H1 (cell line): ENCODE measurements at regions of chr9 and their contacts with region 1.

Region 1: GRCh38 chr9:125255781-125256391 is 5.7 kb upstream of the GAPVD1 start:
- DNase-seq: no peak
- H3K4me3 ChIP-seq: no peak overlapping the region
- H3K27ac ChIP-seq: no peak overlapping the region
- H3K4me1 ChIP-seq: no peaks in the 10 kb centered on the region
- H3K27me3 ChIP-seq: no peaks in the 10 kb centered on the region
- CTCF ChIP-seq: peak; percentile 42 to 60 (median 50)
- EP300 ChIP-seq: no peak
- POLR2A ChIP-seq: no peak
- RAD21 ChIP-seq: peak; percentile 83 to 85

Region 2: GRCh38 chr9:125343518-125344275 is 87.8 kb after region 1 on chr9:
- CTCF ChIA-PET with region 1: interaction called, 10 read pairs
- POLR2A ChIA-PET with region 1: no interaction called
- DNase-seq: peak in 1 of 2 experiments; percentile 49
- H3K4me3 ChIP-seq: peak overlapping the region in 1 of 4 experiments; percentile 20; a peak in 1 of 8 replicates
- H3K27ac ChIP-seq: no peak overlapping the region
- H3K4me1 ChIP-seq: peaks cover 0 to 11% (median 4%) of the 10 kb centered on the region in 4 experiments; a peak in 5 of 7 replicates
- H3K27me3 ChIP-seq: no peaks in the 10 kb centered on the region
- CTCF ChIP-seq: no peak
- EP300 ChIP-seq: no peak
- POLR2A ChIP-seq: no peak
- RAD21 ChIP-seq: no peak

Region 3: DNA sequence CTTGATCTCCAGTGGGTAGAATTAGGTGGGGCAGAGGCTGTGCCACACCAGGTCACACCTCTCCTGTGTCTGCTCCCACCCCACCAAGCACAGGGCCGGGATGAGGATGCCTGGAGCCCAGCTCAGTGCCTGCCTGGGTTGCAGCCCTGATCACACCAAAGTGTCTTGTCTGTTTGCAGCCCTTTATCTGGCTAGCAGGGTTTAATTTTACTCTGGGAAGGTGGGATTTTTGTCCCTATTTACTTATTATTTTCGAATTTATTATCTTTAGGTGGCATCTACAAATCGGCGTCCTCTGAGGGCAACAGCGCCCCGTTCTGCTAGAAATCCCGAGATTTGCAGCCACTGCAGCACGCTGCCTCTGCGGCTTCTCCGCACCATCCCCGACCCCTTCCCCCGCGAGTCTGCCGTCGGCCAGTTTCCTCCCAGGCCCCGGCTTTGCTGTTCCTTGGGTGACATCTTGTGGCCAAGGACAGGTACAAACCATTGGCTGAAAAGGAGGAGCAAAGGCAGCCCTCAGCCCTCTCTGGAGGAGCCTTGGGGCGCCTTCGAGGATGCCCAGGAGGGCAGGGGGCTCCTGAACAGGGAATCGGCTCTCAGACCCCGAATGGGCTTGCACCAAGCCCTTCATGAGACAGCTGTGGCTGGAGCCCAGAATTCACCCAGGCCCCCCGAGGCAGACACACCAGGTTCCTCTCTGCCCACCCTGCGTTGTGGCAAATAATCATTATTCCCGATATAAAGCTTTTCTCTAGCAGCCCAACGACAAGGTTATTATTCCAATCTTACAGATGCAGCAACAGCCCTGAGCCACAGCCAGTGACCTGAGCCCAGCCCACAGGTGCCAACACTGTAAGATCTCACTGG is 118.8 kb after region 1 on chr9:
- CTCF ChIA-PET with region 1: interaction called, 12 read pairs
- POLR2A ChIA-PET with region 1: interaction called, 4 read pairs
- DNase-seq: peak; percentile 68 to 81
- H3K4me3 ChIP-seq: peak overlapping the region in 2 of 4 experiments; percentile 10 to 35; a peak in 3 of 8 replicates
- H3K27ac ChIP-seq: no peak overlapping the region
- H3K4me1 ChIP-seq: peaks cover 0 to 11% (median 4%) of the 10 kb centered on the region in 4 experiments; a peak in 4 of 7 replicates
- H3K27me3 ChIP-seq: no peaks in the 10 kb centered on the region; a peak in 1 of 7 replicates
- CTCF ChIP-seq: peak; percentile 69 to 93 (median 89)
- EP300 ChIP-seq: no peak
- POLR2A ChIP-seq: no peak
- RAD21 ChIP-seq: peak; percentile 100

Region 4: DNA sequence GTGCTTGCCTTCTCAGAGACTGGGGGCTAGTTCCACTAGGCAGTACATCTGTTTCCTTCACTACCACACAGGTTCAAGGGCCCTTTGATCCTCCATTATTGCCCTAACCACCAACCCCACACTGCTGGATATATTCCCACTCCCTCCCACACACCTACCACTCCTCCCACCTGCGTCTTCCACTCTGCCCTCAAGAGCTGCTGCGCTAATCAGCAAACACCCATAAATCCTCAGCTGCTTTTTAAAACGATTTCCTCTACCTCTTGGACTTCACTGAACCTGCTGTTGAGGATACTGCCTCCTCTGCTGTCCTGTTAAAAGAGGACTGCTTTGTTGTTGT is 330.3 kb after region 1 on chr9:
- CTCF ChIA-PET with region 1: no interaction called
- POLR2A ChIA-PET with region 1: no interaction called
- DNase-seq: no peak
- H3K4me3 ChIP-seq: no peak overlapping the region
- H3K27ac ChIP-seq: no peak overlapping the region
- H3K4me1 ChIP-seq: 0 out of 7 replicates have a peak, but pooled peaks cover 0 to 3% (median 1%) of the 10 kb centered on the region in 4 experiments
- H3K27me3 ChIP-seq: no peaks in the 10 kb centered on the region
- CTCF ChIP-seq: no peak
- EP300 ChIP-seq: no peak
- POLR2A ChIP-seq: no peak
- RAD21 ChIP-seq: no peak

Region 5: GRCh38 chr9:125634040-125634717 is 378.3 kb after region 1 on chr9:
- CTCF ChIA-PET with region 1: no interaction called
- POLR2A ChIA-PET with region 1: no interaction called
- DNase-seq: no peak
- H3K4me3 ChIP-seq: no peak overlapping the region
- H3K27ac ChIP-seq: no peak overlapping the region
- H3K4me1 ChIP-seq: peaks cover 3 to 21% (median 9%) of the 10 kb centered on the region in 4 experiments; a peak in 4 of 7 replicates
- H3K27me3 ChIP-seq: no peaks in the 10 kb centered on the region
- CTCF ChIP-seq: no peak
- EP300 ChIP-seq: no peak
- POLR2A ChIP-seq: no peak
- RAD21 ChIP-seq: no peak